MCF 10A (cell line): ENCODE measurements at regions of chr17 and their contacts with region 1.

Region 1: DNA sequence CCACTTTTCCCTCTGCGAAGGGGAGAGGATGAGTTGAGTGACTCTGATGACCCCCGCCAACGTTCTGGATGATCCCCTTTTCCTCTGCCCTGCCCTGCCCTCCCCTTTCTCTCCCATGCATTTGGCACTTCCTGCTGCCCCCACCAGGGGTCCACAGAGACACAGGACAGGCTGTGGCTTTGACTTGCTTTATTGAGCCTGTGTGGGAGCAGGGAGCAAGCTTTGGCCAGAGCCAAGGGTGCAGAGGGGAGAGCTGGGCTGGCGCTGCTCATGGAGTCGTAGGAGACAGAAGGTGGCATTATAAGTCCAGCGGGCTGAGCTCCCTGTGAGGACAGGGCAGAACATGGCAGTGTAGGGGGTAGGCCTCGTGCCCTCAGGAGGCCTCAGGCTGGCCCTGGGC is 1.6 kb downstream of the PPY start:
- DNase-seq: peak; percentile 45
- H3K4me3 Mint-ChIP-seq: no peak overlapping the region
- H3K27ac Mint-ChIP-seq: no peak overlapping the region
- H3K4me1 Mint-ChIP-seq: peaks cover 6% of the 10 kb centered on the region
- H3K27me3 Mint-ChIP-seq: peaks cover 21% of the 10 kb centered on the region
- CTCF ChIP-seq: peak; percentile 41

Region 2: GRCh38 chr17:43871951-43872695 is 68.5 kb before region 1 on chr17:
- CTCF ChIA-PET with region 1: no interaction called
- POLR2A ChIA-PET with region 1: no interaction called
- intact Hi-C with region 1: no loop called
- DNase-seq: no peak
- H3K4me3 Mint-ChIP-seq: peak overlapping the region; percentile 61
- H3K27ac Mint-ChIP-seq: no peak overlapping the region
- H3K4me1 Mint-ChIP-seq: peaks cover 8% of the 10 kb centered on the region
- H3K27me3 Mint-ChIP-seq: peaks cover 48% of the 10 kb centered on the region
- CTCF ChIP-seq: no peak

Region 3: GRCh38 chr17:43900858-43901754 is 39.5 kb before region 1 on chr17:
- CTCF ChIA-PET with region 1: no interaction called
- POLR2A ChIA-PET with region 1: no interaction called
- intact Hi-C with region 1: no loop called
- DNase-seq: no peak
- H3K4me3 Mint-ChIP-seq: peak overlapping the region; percentile 69
- H3K27ac Mint-ChIP-seq: no peak overlapping the region
- H3K4me1 Mint-ChIP-seq: peaks cover 6% of the 10 kb centered on the region
- H3K27me3 Mint-ChIP-seq: peaks cover 41% of the 10 kb centered on the region
- CTCF ChIP-seq: no peak

Region 4: GRCh38 chr17:43958953-43959352 is 18.3 kb after region 1 on chr17:
- CTCF ChIA-PET with region 1: interaction called, 24 read pairs
- POLR2A ChIA-PET with region 1: interaction called, 4 read pairs
- intact Hi-C with region 1: no loop called
- DNase-seq: peak; percentile 62
- H3K4me3 Mint-ChIP-seq: no peak overlapping the region
- H3K27ac Mint-ChIP-seq: no peak overlapping the region
- H3K4me1 Mint-ChIP-seq: peaks cover 5% of the 10 kb centered on the region
- H3K27me3 Mint-ChIP-seq: peaks cover 26% of the 10 kb centered on the region
- CTCF ChIP-seq: no peak

Region 5: DNA sequence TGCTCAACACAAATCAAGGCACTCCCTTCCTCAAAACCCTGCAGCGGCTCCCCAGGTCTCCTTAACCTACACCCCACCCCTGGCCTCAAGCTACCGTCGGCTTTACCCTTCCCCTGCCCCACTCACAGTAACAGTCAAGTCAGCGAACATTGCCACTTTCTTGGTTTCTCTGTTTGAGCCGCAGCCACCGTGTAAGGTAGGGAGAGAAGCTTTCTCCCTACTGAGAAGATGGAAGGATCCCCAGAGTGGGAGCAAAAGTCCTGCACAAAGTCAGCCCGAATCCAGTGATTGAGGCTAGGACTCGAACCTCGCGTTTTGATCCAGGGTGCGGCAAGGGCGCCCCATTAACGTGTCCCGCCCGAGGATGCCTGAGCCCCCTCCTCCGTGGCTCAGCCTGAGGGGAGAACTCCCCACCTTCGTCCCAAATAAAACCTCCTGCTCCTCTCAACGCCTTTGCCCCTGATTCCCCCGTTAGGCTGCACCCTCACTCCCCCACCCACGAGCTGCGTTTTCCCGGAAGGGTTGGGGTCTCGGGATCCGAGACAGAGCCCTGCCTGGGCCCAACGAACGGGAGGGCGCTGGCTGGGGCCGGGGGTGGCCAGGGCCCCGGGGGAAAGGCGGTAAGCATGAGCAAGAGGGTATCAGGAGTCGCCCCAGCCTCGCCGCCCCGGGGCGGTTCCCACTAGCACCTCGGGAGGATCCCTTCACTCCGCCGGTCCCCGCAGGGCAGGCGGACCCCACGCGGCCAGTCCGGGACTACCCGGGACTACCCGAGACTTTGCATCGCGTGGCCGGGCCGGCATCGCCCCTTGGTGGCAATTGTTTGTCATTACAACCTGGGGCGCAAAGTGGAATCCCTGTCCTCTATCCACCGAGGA is 53.9 kb after region 1 on chr17:
- CTCF ChIA-PET with region 1: interaction called, 82 read pairs
- POLR2A ChIA-PET with region 1: interaction called, 4 read pairs
- intact Hi-C with region 1: loop called (anchors 1 kb)
- DNase-seq: peak; percentile 69
- H3K4me3 Mint-ChIP-seq: peak overlapping the region; percentile 64
- H3K27ac Mint-ChIP-seq: no peak overlapping the region
- H3K4me1 Mint-ChIP-seq: peaks cover 8% of the 10 kb centered on the region
- H3K27me3 Mint-ChIP-seq: no peaks in the 10 kb centered on the region
- CTCF ChIP-seq: peak; percentile 95

Region 6: GRCh38 chr17:44170499-44171201 is 230.0 kb after region 1 on chr17 and contains the start of gene ASB16:
- CTCF ChIA-PET with region 1: interaction called, 10 read pairs
- POLR2A ChIA-PET with region 1: interaction called, 4 read pairs
- intact Hi-C with region 1: loop called (anchors 5 kb)
- DNase-seq: no peak
- H3K4me3 Mint-ChIP-seq: no peak within 1 kb of the TSS
- H3K27ac Mint-ChIP-seq: no peak within 1 kb of the TSS
- H3K4me1 Mint-ChIP-seq: peaks cover 11% of the 10 kb centered on the region
- H3K27me3 Mint-ChIP-seq: no peaks in the 10 kb centered on the region
- CTCF ChIP-seq: no peak
- total RNA-seq, gene ASB16: not detected in 2 replicates